GM12878 (cell line): ENCODE measurements at regions of chr1 and their contacts with region 1.

Region 1: GRCh38 chr1:248243204-248243603 is 12.0 kb downstream of the OR2M4 start:
- DNase-seq: peak; percentile 17
- ATAC-seq: peak; percentile 93
- H3K4me3 ChIP-seq: no peak overlapping the region
- H3K27ac ChIP-seq: no peak overlapping the region
- H3K4me1 ChIP-seq: no peaks in the 10 kb centered on the region
- H3K27me3 ChIP-seq: no peaks in the 10 kb centered on the region
- CTCF ChIP-seq: peak; percentile 75 to 83 (median 79)
- EP300 ChIP-seq: no peak
- POLR2A ChIP-seq: no peak
- RAD21 ChIP-seq: peak; percentile 87

Region 2: DNA sequence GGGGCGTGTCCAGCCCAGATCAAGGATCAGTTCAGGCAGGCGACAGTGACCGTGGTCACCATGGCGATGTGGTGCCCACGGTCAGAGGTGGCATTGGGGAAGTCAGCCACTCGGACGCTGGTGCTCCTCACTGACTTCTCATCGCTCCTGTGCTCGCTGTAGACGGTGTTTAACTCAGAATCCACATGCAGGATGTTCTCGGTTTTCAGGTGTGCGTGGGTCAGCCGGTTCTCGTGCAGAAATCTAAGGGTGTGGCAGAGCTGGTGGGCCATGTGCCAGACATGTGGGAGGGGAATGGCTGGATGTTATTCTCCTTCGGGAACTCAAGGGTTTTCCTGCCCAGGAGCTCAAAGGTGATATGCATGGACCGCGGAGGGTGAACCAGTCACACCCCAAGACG is 306.8 kb before region 1 on chr1:
- CTCF ChIA-PET with region 1: interaction called, 5 read pairs
- POLR2A ChIA-PET with region 1: no interaction called
- RAD21 ChIA-PET with region 1: no interaction called
- SMC1A ChIA-PET with region 1: no interaction called
- in situ Hi-C with region 1: no loop called
- intact Hi-C with region 1: loop called (anchors 5 kb)
- DNase-seq: no peak
- ATAC-seq: no peak
- H3K4me3 ChIP-seq: no peak overlapping the region
- H3K27ac ChIP-seq: no peak overlapping the region
- H3K4me1 ChIP-seq: no peaks in the 10 kb centered on the region
- H3K27me3 ChIP-seq: no peaks in the 10 kb centered on the region
- CTCF ChIP-seq: no peak
- EP300 ChIP-seq: no peak
- POLR2A ChIP-seq: no peak
- RAD21 ChIP-seq: no peak

Region 3: DNA sequence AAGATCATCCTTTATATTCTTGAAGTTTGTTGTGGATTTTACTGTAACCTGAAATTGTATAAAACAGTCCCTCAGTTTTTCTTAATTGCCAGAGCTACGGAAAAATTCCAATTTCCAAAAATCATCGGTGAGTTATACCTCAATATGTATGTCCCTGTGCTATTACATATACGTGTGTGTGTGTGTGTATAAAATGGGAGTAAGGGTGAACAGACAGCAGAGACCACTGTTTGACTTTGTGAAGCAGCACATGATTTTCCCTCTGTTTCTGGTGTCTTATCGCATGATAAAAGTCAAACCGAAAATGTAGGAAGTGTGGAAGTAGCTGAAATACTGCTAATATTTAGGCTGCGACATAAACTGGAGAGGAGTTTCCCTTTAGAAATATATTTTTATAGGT is 160.8 kb after region 1 on chr1:
- CTCF ChIA-PET with region 1: interaction called, 5 read pairs
- POLR2A ChIA-PET with region 1: no interaction called
- RAD21 ChIA-PET with region 1: interaction called, 7 read pairs
- SMC1A ChIA-PET with region 1: interaction called, 4 read pairs
- in situ Hi-C with region 1: no loop called
- intact Hi-C with region 1: loop called (anchors 2 kb)
- DNase-seq: peak; percentile 76
- ATAC-seq: no peak
- H3K4me3 ChIP-seq: no peak overlapping the region
- H3K27ac ChIP-seq: no peak overlapping the region
- H3K4me1 ChIP-seq: peaks cover 8% of the 10 kb centered on the region
- H3K27me3 ChIP-seq: no peaks in the 10 kb centered on the region
- CTCF ChIP-seq: peak; percentile 5 to 39 (median 22); a peak in 5 of 6 replicates
- EP300 ChIP-seq: no peak
- POLR2A ChIP-seq: no peak
- RAD21 ChIP-seq: peak; percentile 51

Region 4: DNA sequence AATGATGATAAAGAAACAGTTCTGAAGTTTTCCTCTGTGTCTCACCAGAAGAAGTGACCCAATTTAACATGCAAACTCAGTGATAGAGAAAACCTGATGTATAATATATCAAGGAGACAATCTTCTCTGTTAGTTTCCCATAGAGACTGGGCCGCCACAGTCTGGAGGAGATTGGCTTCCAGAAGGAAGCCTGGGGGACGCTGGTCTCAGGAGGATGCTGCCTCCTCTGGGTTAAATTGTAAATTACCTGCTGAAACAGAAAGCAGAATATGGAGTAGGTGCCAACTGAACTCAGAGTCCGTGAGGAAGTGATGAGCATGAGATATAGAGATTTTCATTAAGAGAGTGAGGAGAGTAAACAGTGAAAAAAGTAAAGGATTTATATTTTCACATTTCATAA is 443.6 kb after region 1 on chr1:
- CTCF ChIA-PET with region 1: interaction called, 8 read pairs
- POLR2A ChIA-PET with region 1: no interaction called
- RAD21 ChIA-PET with region 1: interaction called, 19 read pairs
- SMC1A ChIA-PET with region 1: interaction called, 9 read pairs
- in situ Hi-C with region 1: loop called (anchors 5 kb)
- intact Hi-C with region 1: no loop called
- DNase-seq: peak; percentile 43
- ATAC-seq: peak; percentile 78
- H3K4me3 ChIP-seq: no peak overlapping the region
- H3K27ac ChIP-seq: no peak overlapping the region; the same call in 1 of the 2 replicates
- H3K4me1 ChIP-seq: peaks cover 3% of the 10 kb centered on the region; the same call in 1 of the 2 replicates
- H3K27me3 ChIP-seq: no peaks in the 10 kb centered on the region
- CTCF ChIP-seq: peak; percentile 45 to 70 (median 70); a peak in 5 of 6 replicates
- EP300 ChIP-seq: no peak
- POLR2A ChIP-seq: no peak
- RAD21 ChIP-seq: peak; percentile 95

Region 5: DNA sequence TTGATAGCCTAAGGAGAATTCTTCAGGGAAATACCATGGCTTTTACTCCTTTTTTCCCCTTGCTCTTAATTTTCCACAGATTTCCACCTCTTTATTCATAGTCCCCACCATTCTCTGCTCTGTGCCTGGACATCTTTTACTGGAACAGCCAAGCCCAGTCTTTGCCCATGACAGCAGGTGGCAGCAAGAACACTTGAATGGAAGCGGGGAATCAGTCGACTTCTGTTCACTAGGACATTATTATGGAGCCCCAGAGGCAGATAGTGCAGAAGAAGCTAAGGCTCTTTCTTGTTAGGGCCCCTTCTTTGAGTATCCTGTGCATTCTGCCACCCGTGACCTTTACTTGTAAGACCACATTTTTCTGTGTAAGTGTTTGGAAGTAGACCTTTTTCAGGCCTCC is 453.1 kb after region 1 on chr1:
- CTCF ChIA-PET with region 1: interaction called, 5 read pairs
- POLR2A ChIA-PET with region 1: no interaction called
- RAD21 ChIA-PET with region 1: interaction called, 6 read pairs
- SMC1A ChIA-PET with region 1: interaction called, 5 read pairs
- in situ Hi-C with region 1: no loop called
- intact Hi-C with region 1: loop called (anchors 5 kb)
- DNase-seq: no peak
- ATAC-seq: peak; percentile 86
- H3K4me3 ChIP-seq: no peak overlapping the region
- H3K27ac ChIP-seq: no peak overlapping the region
- H3K4me1 ChIP-seq: no peaks in the 10 kb centered on the region
- H3K27me3 ChIP-seq: no peaks in the 10 kb centered on the region
- CTCF ChIP-seq: peak; percentile 27 to 63 (median 35); a peak in 4 of 6 replicates
- EP300 ChIP-seq: no peak
- POLR2A ChIP-seq: no peak
- RAD21 ChIP-seq: peak; percentile 55

Region 6: GRCh38 chr1:248821101-248821500 is 577.9 kb after region 1 on chr1:
- CTCF ChIA-PET with region 1: interaction called, 11 read pairs
- POLR2A ChIA-PET with region 1: no interaction called
- RAD21 ChIA-PET with region 1: no interaction called
- SMC1A ChIA-PET with region 1: interaction called, 8 read pairs
- in situ Hi-C with region 1: no loop called
- intact Hi-C with region 1: loop called (anchors 5 kb)
- DNase-seq: no peak
- ATAC-seq: no peak
- H3K4me3 ChIP-seq: no peak overlapping the region
- H3K27ac ChIP-seq: no peak overlapping the region; the same call in 1 of the 2 replicates
- H3K4me1 ChIP-seq: peaks cover 22% of the 10 kb centered on the region
- H3K27me3 ChIP-seq: no peaks in the 10 kb centered on the region
- CTCF ChIP-seq: no peak
- EP300 ChIP-seq: no peak
- POLR2A ChIP-seq: no peak
- RAD21 ChIP-seq: no peak